Activated B cell treated with CpG ODN at 0.5 μM for 24 hours (primary cell): ENCODE measurements at regions of chr13 and their contacts with region 1.

Region 1: DNA sequence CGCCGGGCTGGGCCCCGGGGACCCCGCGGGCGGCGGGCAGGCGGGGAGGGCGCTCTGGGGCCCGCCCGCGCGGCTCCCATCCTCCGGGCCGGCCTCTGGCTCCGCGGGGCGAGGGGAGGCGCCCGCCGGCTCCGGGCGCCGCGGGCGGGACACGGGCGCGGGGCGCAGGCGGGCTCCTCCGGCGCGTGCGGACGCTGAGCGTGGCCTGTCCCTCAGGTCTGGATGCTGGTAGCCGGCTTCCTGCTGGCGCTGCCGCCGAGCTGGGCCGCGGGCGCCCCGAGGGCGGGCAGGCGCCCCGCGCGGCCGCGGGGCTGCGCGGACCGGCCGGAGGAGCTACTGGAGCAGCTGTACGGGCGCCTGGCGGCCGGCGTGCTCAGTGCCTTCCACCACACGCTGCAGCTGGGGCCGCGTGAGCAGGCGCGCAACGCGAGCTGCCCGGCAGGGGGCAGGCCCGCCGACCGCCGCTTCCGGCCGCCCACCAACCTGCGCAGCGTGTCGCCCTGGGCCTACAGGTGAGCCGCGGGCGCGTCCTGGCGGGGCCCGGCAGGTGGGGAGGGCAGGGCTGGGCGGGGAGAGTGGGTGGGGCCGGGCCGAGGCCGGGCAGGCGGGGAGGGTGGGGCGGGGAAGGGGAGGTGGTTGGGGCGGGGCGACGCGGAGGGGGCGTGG is 414 bp downstream of the IL17D start:
- DNase-seq: peak; percentile 72
- ATAC-seq: peak; percentile 93
- H3K4me3 Mint-ChIP-seq: no peak overlapping the region
- H3K27ac Mint-ChIP-seq: no peak overlapping the region
- H3K4me1 Mint-ChIP-seq: peaks cover 14% of the 10 kb centered on the region
- H3K27me3 Mint-ChIP-seq: peaks cover 19% of the 10 kb centered on the region
- CTCF ChIP-seq: no peak

Region 2: GRCh38 chr13:19618925-19619324 is 1085.0 kb before region 1 on chr13:
- CTCF ChIA-PET with region 1: no interaction called
- POLR2A ChIA-PET with region 1: no interaction called
- intact Hi-C with region 1: no loop called
- DNase-seq: no peak
- ATAC-seq: no peak
- H3K4me3 Mint-ChIP-seq: no peak overlapping the region
- H3K27ac Mint-ChIP-seq: no peak overlapping the region
- H3K4me1 Mint-ChIP-seq: no peaks in the 10 kb centered on the region
- H3K27me3 Mint-ChIP-seq: peaks cover 24% of the 10 kb centered on the region
- CTCF ChIP-seq: no peak

Region 3: GRCh38 chr13:20197361-20197834 is 506.5 kb before region 1 on chr13:
- CTCF ChIA-PET with region 1: no interaction called
- POLR2A ChIA-PET with region 1: no interaction called
- intact Hi-C with region 1: loop called (anchors 10 kb)
- DNase-seq: no peak
- ATAC-seq: peak; percentile 71
- H3K4me3 Mint-ChIP-seq: no peak overlapping the region
- H3K27ac Mint-ChIP-seq: no peak overlapping the region
- H3K4me1 Mint-ChIP-seq: peaks cover 16% of the 10 kb centered on the region
- H3K27me3 Mint-ChIP-seq: peaks cover 40% of the 10 kb centered on the region
- CTCF ChIP-seq: peak; percentile 6

Region 4: GRCh38 chr13:20546556-20546955 is 157.4 kb before region 1 on chr13:
- CTCF ChIA-PET with region 1: no interaction called
- POLR2A ChIA-PET with region 1: no interaction called
- intact Hi-C with region 1: no loop called
- DNase-seq: no peak
- ATAC-seq: peak; percentile 63
- H3K4me3 Mint-ChIP-seq: peak overlapping the region; percentile 29
- H3K27ac Mint-ChIP-seq: peak overlapping the region; percentile 48
- H3K4me1 Mint-ChIP-seq: peaks cover 47% of the 10 kb centered on the region
- H3K27me3 Mint-ChIP-seq: no peaks in the 10 kb centered on the region
- CTCF ChIP-seq: no peak

Region 5: DNA sequence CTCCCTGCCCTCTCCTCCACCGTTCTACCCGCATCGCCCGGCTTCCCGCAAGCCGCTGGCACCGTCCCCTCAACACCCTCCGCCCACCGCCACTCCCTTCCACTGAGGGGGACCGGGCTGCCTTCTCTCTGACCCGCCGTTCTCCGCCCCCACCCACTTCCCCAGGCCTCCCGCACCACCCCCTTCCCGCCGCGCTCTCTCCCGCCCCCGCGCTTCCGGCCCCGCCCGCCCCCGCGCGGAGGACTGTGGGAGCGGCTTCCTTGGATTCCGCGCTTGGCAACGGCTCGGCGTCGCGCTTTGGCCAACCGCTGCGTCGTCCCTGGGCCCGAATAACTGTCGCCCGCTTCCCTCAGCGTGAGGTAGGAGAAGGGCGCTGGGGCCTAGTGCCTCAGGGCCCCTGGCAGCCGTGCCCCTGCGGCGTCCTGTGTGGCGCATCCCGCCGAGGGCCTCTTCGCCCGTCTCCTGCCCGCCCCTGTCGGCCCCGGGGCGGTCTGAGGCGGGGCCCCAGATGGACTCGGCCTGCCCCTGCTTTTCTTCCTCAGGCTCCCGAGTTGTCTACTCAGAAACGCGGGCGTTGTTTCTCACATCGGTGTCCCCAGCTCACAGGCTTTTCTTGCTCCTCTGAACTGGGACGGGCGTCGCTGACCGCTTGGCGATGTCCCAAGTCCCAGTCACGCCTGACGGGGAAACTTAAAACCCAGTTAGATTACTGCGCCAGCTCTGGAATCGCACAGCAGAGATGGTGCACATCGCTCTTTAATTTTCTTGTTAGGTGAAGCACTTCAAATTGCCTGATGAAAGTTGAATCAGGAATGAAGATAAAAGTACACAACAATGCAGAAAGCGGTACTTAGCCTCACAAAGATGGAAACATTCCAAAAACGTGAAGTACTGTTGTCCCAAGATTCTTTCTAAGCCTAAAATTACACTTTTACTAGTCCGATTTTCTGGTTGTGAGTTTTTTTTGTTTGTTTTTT is 136.7 kb before region 1 on chr13 and contains the start of gene IFT88:
- CTCF ChIA-PET with region 1: no interaction called
- POLR2A ChIA-PET with region 1: no interaction called
- intact Hi-C with region 1: loop called (anchors 2 kb)
- DNase-seq: peak; percentile 92
- ATAC-seq: peak; percentile 90
- H3K4me3 Mint-ChIP-seq: peak within 1 kb of the TSS; percentile 92
- H3K27ac Mint-ChIP-seq: peak within 1 kb of the TSS; percentile 89
- H3K4me1 Mint-ChIP-seq: peaks cover 18% of the 10 kb centered on the region
- H3K27me3 Mint-ChIP-seq: no peaks in the 10 kb centered on the region
- CTCF ChIP-seq: no peak
- total RNA-seq, gene IFT88: 16.4 and 17.3 TPM in 2 replicates

Region 6: DNA sequence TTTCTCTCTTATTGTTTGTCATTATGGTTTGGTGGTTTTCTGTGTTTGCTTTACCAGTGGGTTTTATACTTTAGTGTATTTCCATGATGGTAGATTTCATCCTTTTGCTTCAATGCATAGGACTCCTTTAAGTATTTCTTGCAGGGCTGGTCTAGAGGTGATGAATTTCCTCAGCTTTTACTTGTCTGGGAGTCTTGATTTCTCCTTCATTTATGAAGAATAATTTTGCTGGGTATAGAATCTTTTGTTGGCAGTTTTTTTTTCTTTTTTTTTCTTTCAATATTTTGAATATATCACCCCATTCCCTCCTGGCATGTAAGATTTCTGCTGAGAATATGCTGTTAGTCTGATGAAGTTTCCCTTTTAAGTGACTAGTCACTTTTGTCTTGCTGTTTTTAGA is 50.1 kb after region 1 on chr13:
- CTCF ChIA-PET with region 1: no interaction called
- POLR2A ChIA-PET with region 1: no interaction called
- intact Hi-C with region 1: no loop called
- DNase-seq: no peak
- ATAC-seq: no peak
- H3K4me3 Mint-ChIP-seq: no peak overlapping the region
- H3K27ac Mint-ChIP-seq: no peak overlapping the region
- H3K4me1 Mint-ChIP-seq: no peaks in the 10 kb centered on the region
- H3K27me3 Mint-ChIP-seq: no peaks in the 10 kb centered on the region
- CTCF ChIP-seq: no peak

Region 7: GRCh38 chr13:20902438-20903163 is 198.7 kb after region 1 on chr13 and contains the start of gene XPO4:
- CTCF ChIA-PET with region 1: no interaction called
- POLR2A ChIA-PET with region 1: no interaction called
- intact Hi-C with region 1: loop called (anchors 5 kb)
- DNase-seq: peak; percentile 80
- ATAC-seq: peak; percentile 93
- H3K4me3 Mint-ChIP-seq: peak within 1 kb of the TSS; percentile 91
- H3K27ac Mint-ChIP-seq: peak within 1 kb of the TSS; percentile 86
- H3K4me1 Mint-ChIP-seq: peaks cover 32% of the 10 kb centered on the region
- H3K27me3 Mint-ChIP-seq: peaks cover 2% of the 10 kb centered on the region
- CTCF ChIP-seq: no peak
- total RNA-seq, gene XPO4: 25.2 and 27.4 TPM in 2 replicates

Region 8: GRCh38 chr13:21152251-21152899 is 448.5 kb after region 1 on chr13:
- CTCF ChIA-PET with region 1: no interaction called
- POLR2A ChIA-PET with region 1: no interaction called
- intact Hi-C with region 1: no loop called
- DNase-seq: no peak
- ATAC-seq: no peak
- H3K4me3 Mint-ChIP-seq: no peak overlapping the region
- H3K27ac Mint-ChIP-seq: no peak overlapping the region
- H3K4me1 Mint-ChIP-seq: no peaks in the 10 kb centered on the region
- H3K27me3 Mint-ChIP-seq: no peaks in the 10 kb centered on the region
- CTCF ChIP-seq: no peak